B cell (primary cell): ENCODE measurements at regions of chr6 and their contacts with region 1.

Region 1: GRCh38 chr6:149082286-149082707 is 235.2 kb upstream of the TAB2 start:
- DNase-seq: peak; percentile 82
- ATAC-seq: peak; percentile 77
- H3K4me3 ChIP-seq: no peak overlapping the region
- H3K4me3 Mint-ChIP-seq: no peak overlapping the region
- H3K27ac ChIP-seq: no peak overlapping the region
- H3K27ac Mint-ChIP-seq: no peak overlapping the region
- H3K4me1 ChIP-seq: peaks cover 0 to 3% of the 10 kb centered on the region in 2 donors
- H3K4me1 Mint-ChIP-seq: peaks cover 7% of the 10 kb centered on the region
- H3K27me3 ChIP-seq: no peaks in the 10 kb centered on the region
- H3K27me3 Mint-ChIP-seq: no peaks in the 10 kb centered on the region
- CTCF ChIP-seq: peak; percentile 93

Region 2: DNA sequence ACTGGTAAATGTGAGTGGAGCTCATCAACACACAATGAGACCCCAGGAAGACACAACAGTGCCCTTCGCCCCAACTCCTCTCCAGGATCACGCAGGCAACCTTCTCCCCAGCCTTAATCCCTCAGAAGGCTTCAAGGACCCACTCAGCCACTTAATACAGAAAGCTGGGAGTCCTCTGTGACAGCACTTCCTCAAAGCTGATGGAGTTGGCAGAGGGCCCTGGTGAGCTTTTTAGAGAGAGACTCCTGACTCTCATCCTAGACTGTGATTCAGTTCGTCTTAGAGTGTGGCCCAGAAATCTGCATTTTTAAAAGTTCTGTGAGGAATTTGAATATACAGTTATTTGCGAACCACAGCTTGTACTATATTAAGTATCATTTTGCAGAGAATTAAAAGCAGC is 147.8 kb before region 1 on chr6:
- CTCF ChIA-PET with region 1: no interaction called
- POLR2A ChIA-PET with region 1: no interaction called
- intact Hi-C with region 1: no loop called
- DNase-seq: no peak
- ATAC-seq: no peak
- H3K4me3 ChIP-seq: no peak overlapping the region
- H3K4me3 Mint-ChIP-seq: no peak overlapping the region
- H3K27ac ChIP-seq: no peak overlapping the region
- H3K27ac Mint-ChIP-seq: no peak overlapping the region
- H3K4me1 ChIP-seq: peaks cover 8 to 9% of the 10 kb centered on the region in 2 donors
- H3K4me1 Mint-ChIP-seq: peaks cover 33% of the 10 kb centered on the region
- H3K27me3 ChIP-seq: no peaks in the 10 kb centered on the region
- H3K27me3 Mint-ChIP-seq: no peaks in the 10 kb centered on the region
- CTCF ChIP-seq: no peak

Region 3: DNA sequence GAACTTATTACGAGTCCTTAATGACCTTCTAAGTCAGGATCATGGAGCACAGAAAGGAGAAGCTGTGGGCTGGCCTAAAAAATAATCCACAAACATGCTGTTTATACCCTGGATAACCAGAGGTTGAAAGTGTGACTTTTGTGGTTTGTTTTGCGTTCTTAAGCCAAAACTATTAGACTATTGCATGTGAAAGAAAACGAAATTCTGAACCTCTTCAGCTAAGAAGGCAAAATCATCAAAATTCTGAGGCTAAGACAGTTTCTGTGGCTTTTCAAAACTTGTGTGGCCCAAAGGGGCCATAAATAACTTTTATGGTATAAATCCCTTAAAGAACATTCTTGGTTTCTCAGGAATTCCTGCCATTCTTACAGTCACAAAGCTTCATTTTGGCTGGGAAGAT is 84.4 kb before region 1 on chr6:
- CTCF ChIA-PET with region 1: no interaction called
- POLR2A ChIA-PET with region 1: no interaction called
- intact Hi-C with region 1: no loop called
- DNase-seq: no peak
- ATAC-seq: no peak
- H3K4me3 ChIP-seq: no peak overlapping the region
- H3K4me3 Mint-ChIP-seq: no peak overlapping the region
- H3K27ac ChIP-seq: no peak overlapping the region
- H3K27ac Mint-ChIP-seq: no peak overlapping the region
- H3K4me1 ChIP-seq: peaks cover 28 to 30% of the 10 kb centered on the region in 2 donors
- H3K4me1 Mint-ChIP-seq: peaks cover 40% of the 10 kb centered on the region
- H3K27me3 ChIP-seq: no peaks in the 10 kb centered on the region
- H3K27me3 Mint-ChIP-seq: no peaks in the 10 kb centered on the region
- CTCF ChIP-seq: no peak

Region 4: DNA sequence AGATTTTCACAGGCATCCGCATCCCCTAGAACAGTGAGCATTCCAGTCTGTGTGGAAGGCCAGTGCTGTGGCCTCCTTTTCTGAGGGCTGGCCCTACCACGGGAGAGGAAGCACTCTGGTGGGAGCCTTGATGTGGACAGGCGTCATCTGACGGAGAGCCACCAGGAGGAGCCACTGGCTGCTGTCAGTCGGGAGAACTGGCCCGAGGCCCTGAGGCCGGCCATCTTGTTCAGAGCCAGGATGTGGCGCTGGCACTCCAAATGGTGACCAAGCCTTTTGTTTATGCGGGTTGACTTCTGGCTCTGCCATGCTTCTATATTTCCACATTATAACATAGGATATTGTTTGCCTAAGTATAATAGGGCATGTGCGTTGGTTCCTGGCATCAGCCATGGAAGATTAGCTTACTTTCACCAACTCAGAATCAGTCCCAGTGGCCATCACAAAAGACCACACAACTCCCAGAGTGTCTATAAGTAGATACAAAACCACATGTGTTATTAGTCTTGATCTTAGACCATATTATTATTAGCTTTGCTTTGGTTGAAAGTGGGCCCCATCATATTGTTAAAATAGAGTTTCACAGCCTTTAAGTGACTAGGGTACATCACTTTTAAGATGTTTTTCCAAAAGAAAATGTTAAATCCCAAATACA is 38.7 kb before region 1 on chr6:
- CTCF ChIA-PET with region 1: interaction called, 7 read pairs
- POLR2A ChIA-PET with region 1: no interaction called
- intact Hi-C with region 1: loop called (anchors 5 kb)
- DNase-seq: no peak
- ATAC-seq: peak; percentile 33
- H3K4me3 ChIP-seq: no peak overlapping the region
- H3K4me3 Mint-ChIP-seq: no peak overlapping the region
- H3K27ac ChIP-seq: no peak overlapping the region
- H3K27ac Mint-ChIP-seq: no peak overlapping the region
- H3K4me1 ChIP-seq: peaks cover 22 to 32% of the 10 kb centered on the region in 2 donors
- H3K4me1 Mint-ChIP-seq: peaks cover 35% of the 10 kb centered on the region
- H3K27me3 ChIP-seq: no peaks in the 10 kb centered on the region
- H3K27me3 Mint-ChIP-seq: no peaks in the 10 kb centered on the region
- CTCF ChIP-seq: peak; percentile 37

Region 5: GRCh38 chr6:149094156-149094555 is 11.9 kb after region 1 on chr6:
- CTCF ChIA-PET with region 1: interaction called, 13 read pairs
- POLR2A ChIA-PET with region 1: no interaction called
- intact Hi-C with region 1: no loop called
- DNase-seq: no peak
- ATAC-seq: no peak
- H3K4me3 ChIP-seq: no peak overlapping the region
- H3K4me3 Mint-ChIP-seq: no peak overlapping the region
- H3K27ac ChIP-seq: no peak overlapping the region
- H3K27ac Mint-ChIP-seq: no peak overlapping the region
- H3K4me1 ChIP-seq: no peaks in the 10 kb centered on the region
- H3K4me1 Mint-ChIP-seq: peaks cover 2% of the 10 kb centered on the region
- H3K27me3 ChIP-seq: peaks cover 0 to 3% (median 0%) of the 10 kb centered on the region in 4 experiments
- H3K27me3 Mint-ChIP-seq: peaks cover 3% of the 10 kb centered on the region
- CTCF ChIP-seq: no peak

Region 6: GRCh38 chr6:149423964-149424440 is 341.7 kb after region 1 on chr6:
- CTCF ChIA-PET with region 1: interaction called, 15 read pairs
- POLR2A ChIA-PET with region 1: no interaction called
- intact Hi-C with region 1: loop called (anchors 5 kb)
- DNase-seq: no peak
- ATAC-seq: no peak
- H3K4me3 ChIP-seq: no peak overlapping the region
- H3K4me3 Mint-ChIP-seq: no peak overlapping the region
- H3K27ac ChIP-seq: no peak overlapping the region
- H3K27ac Mint-ChIP-seq: no peak overlapping the region
- H3K4me1 ChIP-seq: no peaks in the 10 kb centered on the region
- H3K4me1 Mint-ChIP-seq: no peaks in the 10 kb centered on the region
- H3K27me3 ChIP-seq: no peaks in the 10 kb centered on the region
- H3K27me3 Mint-ChIP-seq: peaks cover 3% of the 10 kb centered on the region
- CTCF ChIP-seq: no peak